ENCODE measurements at regions of chr2 and their contacts with region 1.

Region 1: DNA sequence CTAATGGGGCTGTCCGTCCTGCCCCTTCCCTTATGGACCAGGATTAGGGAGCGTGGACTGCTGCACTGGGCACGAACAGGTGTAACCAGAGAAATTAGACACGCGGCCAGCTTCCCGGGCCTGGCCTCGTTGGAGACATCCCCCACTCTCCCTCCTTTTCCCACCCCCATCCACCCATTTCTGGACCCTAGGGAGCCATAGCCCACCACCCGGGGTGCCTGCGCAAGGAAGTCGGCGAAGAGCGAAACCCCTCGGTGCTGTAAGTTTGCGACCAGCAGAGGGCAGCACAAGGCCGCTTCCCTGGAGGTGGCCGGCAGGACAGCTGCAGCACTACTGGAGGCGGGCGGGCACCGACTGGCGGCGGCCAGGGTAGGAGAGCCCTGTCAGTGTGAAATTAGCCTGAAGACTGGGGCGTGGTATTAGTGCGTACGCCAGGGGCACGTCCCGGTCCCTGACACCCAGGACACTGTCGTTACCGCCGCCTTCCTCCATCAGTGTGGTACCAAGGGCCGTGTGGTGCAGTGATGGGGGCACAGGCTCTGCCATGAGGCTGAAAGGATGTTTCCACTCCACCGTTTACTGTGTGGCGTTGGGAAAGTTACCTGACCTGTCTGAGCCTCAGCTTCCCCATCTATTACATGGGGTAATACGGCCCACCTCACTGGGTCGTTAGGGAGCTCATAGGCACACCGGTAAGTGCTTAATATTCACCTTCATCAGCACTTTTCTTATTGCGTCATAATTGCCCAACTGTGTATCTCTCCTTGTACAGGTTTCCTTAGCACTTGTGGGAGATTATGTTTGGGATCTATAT is 36.0 kb upstream of the CD207 start:
- DNase-seq: peak; percentile 56 to 96 (median 84)

Region 2: DNA sequence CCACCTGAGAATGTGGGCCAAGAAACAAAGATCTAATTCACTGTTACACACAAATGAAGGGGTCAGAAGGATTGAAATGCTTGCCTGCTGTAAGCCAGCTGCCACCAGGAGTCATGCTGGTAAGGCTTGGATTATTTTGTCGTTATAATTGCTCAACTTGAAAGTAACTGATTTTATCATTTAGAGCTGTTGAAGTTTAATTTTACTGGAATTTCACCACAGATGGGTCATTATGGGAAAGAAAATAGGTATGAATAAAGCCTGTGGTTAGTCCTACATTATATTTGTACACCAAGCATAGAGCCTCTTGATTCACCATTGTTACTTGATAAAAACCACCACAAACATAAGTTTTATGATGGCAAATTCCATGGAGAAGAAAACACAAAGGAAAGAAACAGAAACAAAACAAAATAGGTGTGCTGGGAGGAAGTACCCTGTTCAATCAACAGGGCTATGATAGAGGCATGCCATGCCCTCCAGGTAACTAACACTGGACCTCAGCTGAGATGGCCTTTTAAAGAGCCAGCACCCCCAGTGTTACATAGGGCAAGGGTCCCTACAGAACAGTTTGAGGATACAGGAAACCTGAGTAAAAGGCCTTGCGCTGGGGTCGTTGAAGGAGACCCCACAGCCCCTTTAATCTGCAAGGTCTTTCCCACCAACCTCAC is 54.2 kb before region 1 on chr2:
- intact Hi-C with region 1: no loop called
- DNase-seq: no peak

Region 3: GRCh38 chr2:70828914-70829824 is 42.4 kb before region 1 on chr2:
- intact Hi-C with region 1: no loop called
- DNase-seq: no peak

Region 4: GRCh38 chr2:70919672-70920366 is 48.2 kb after region 1 on chr2:
- intact Hi-C with region 1: loop called (anchors 2 kb)
- DNase-seq: peak in 8 of 10 donors; percentile 43 to 95 (median 74)

Region 5: DNA sequence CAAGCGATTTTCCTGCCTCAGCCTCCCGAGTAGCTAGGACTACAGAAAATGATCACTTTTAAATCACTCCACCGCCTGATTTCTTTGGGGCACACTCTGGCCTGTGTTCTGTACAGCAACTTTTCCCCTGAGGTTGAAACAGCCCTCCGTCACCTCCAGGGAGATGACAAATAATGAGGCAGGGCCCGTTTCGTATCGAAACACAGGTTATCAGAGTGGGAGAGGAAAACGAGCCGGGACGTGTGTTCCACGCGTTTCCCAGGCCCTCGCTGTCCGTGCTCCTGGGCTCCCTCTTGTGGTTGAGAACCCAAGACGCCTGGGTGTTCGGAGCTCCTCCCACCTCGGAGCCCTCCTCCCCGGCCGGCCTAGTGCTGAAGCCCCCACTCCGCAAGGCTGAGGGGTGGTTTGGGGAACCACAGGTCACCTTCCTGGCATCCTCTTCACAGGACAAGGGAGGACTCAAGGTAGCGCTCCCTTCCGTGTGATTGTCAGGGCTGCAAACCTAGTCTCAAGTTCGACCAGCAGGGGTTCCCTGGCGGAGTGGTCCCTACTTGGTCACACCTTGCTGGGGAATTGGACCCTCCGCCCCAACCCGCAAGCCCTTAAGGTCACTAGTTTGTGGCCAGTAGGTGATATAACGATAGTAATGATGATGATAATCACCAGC is 76.9 kb after region 1 on chr2:
- intact Hi-C with region 1: loop called (anchors 1 kb)
- DNase-seq: peak; percentile 51 to 95 (median 81)

Measured in posterior cingulate gyrus (tissue), 11 donors.